ENCODE measurements at regions of chr16 and their contacts with region 1.

Region 1: DNA sequence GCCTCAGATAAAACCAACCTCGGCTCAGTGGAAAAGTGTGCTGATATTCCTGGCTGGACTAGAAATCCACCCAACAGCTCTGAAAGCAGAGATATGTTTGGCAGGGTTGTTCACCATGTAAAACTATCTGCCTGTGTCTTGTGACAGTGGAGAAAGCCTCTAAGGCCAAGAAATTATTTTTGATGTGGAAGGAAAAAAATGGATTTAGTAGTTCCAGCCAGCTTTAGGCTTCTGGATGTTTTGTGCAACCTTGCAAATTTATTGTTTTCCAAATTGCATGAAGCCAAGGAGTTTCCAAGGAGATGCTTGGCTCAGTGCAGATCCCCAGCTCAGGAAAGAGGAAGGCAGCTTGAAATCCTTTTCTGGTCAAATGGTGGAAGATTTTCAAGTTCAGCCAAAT is 31.6 kb downstream of the TEKT5 start:
- DNase-seq: no peak
- H3K27ac ChIP-seq: no peak overlapping the region
- CTCF ChIP-seq: no peak

Region 2: GRCh38 chr16:10652730-10653590 is 10.2 kb before region 1 on chr16:
- CTCF ChIA-PET with region 1: no interaction called
- POLR2A ChIA-PET with region 1: no interaction called
- DNase-seq: peak; percentile 95
- H3K27ac ChIP-seq: peak overlapping the region; percentile 78
- CTCF ChIP-seq: no peak

Region 3: GRCh38 chr16:11896777-11897176 is 1233.6 kb after region 1 on chr16:
- CTCF ChIA-PET with region 1: interaction called, 10 read pairs
- POLR2A ChIA-PET with region 1: no interaction called
- DNase-seq: no peak
- H3K27ac ChIP-seq: peak overlapping the region; percentile 48
- CTCF ChIP-seq: no peak

Measured in RWPE1 (cell line).